ENCODE measurements at regions of chr5 and their contacts with region 1.

Region 1: GRCh38 chr5:157370967-157371366 is 89.0 kb upstream of the NIPAL4 start:
- DNase-seq: no peak

Region 2: DNA sequence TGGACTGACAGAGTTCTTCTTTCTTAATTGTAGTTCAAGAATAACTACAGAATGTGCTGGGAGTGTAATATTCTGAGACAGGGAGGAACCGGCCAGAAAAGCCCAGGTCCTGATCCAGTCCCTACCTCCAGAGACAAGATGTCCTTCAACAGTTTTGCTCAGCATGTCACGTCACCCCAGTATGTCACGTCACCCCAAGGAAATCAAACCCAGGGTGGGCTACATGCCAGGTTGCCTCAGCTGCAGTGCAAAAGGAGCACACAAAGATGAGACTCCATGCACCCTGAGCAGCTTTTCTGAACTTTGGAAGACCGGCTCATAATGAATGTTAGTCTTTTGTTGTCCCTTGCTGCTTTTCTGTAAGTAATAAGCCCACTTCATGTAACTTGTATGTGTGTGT is 63.1 kb after region 1 on chr5:
- intact Hi-C with region 1: no loop called
- DNase-seq: no peak

Region 3: DNA sequence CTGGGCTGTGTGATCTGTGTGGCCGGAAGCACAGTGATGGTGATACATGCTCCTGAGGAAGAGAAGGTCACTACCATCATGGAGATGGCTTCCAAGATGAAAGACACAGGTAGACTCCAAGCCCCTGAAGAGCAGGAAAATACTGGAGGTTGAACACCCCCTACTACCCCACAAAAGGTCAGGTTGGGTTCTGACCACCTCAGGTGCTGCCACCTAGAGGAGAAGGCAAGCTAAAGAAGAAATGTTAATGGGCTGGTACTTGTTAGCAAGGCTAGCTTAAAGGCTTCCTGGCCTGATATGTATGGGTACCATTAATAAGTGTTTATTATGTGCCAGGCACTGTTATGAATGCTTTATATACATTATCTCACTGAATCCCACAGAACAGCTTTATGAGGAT is 100.7 kb after region 1 on chr5:
- intact Hi-C with region 1: loop called (anchors 5 kb)
- DNase-seq: no peak

Region 4: DNA sequence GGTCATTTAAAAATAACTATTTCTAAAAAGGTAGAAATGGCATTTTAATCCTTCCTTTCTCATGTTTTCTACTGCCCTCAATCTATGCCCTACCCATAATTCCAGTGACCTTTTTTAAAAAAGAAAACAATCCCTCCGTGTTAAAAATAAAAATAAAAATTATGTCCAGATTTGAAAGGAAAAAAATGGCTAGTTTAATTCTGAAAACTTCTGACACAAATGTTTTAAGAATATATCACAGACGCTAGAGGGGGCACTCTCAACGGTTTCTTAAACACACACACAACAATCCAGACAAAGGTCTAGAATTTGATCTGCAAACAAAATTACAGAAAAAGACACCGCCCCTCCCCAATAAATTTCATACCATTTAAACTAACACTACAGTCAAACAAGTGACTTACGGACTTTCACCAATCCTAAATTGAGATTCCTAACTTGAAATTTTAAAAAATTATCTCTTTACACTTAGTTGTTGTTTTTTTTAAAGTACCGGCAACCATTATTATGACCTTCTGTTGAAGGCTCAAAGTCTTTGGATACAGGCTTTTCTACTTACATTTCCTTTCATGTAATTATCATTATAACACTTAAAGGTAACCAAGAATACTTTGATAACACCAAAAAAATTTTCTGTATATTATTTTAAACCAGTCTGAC is 449.8 kb after region 1 on chr5:
- intact Hi-C with region 1: no loop called
- DNase-seq: no peak

Measured in cardiac septum (tissue), 1 donor.